ENCODE measurements at regions of chr18 and their contacts with region 1.

Region 1: DNA sequence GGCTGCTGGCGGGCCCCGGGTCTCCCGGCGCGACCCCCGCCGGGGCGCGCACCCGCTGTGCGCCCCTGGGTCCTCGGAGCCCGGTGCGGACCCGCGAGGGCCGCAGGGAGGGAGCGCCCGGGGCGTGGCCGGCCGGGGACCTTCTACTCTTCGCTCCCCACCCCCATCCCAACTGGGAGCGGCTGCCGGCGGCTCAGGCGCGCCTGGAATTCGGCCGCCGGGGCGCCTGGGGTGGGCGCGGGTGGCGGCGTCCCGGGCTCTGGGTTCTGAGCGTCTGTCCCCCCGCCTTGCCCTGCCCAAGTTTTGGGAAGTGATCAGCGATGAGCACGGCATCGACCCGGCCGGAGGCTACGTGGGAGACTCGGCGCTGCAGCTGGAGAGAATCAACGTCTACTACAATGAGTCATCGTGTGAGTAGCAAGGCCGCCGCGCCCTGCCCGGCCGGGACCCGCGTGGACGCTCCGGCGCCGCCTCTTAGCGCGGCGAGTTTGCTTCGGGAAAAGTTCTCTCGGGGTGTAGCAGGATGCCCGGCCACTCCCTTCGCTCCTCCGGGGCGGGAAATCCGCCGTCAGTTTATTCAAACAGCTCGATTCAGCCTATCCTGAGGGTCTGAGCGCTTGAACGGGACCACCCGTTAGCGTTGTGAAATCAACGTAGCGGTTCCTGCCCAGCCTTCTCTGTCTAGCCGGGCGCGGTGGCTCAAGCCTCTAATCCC is 502 bp downstream of the TUBB6 start:
- DNase-seq: peak; percentile 43 to 75
- ATAC-seq: peak; percentile 84 to 91
- H3K4me3 ChIP-seq: peak overlapping the region; percentile 62
- H3K27ac ChIP-seq: peak overlapping the region; percentile 82 to 99
- H3K4me1 ChIP-seq: peaks cover 11% of the 10 kb centered on the region
- CTCF ChIP-seq: no peak
- EP300 ChIP-seq: no peak
- POLR2A ChIP-seq: no peak; the same call in 1 of the 2 replicates
- RAD21 ChIP-seq: no peak

Region 2: GRCh38 chr18:12060182-12060870 is 248.2 kb before region 1 on chr18:
- CTCF ChIA-PET with region 1: no interaction called
- POLR2A ChIA-PET with region 1: interaction called, 14 read pairs
- DNase-seq: peak in 1 of 2 experiments; percentile 21
- ATAC-seq: peak; percentile 92 to 93
- H3K4me3 ChIP-seq: no peak overlapping the region
- H3K27ac ChIP-seq: 0 out of 6 replicates have a peak overlapping the region, but pooled peaks of 1 of the 2 experiments have one; percentile 31
- H3K4me1 ChIP-seq: 0 out of 3 replicates have a peak, but pooled peaks cover 3% of the 10 kb centered on the region
- CTCF ChIP-seq: no peak
- EP300 ChIP-seq: no peak
- POLR2A ChIP-seq: no peak
- RAD21 ChIP-seq: no peak

Region 3: GRCh38 chr18:12327510-12328178 is 19.1 kb after region 1 on chr18:
- CTCF ChIA-PET with region 1: interaction called, 18 read pairs
- POLR2A ChIA-PET with region 1: interaction called, 4 read pairs
- DNase-seq: peak; percentile 77
- ATAC-seq: peak; percentile 92 to 93
- H3K4me3 ChIP-seq: no peak overlapping the region
- H3K27ac ChIP-seq: no peak overlapping the region
- H3K4me1 ChIP-seq: peaks cover 4% of the 10 kb centered on the region; the same call in 1 of the 3 replicates
- CTCF ChIP-seq: peak; percentile 66
- EP300 ChIP-seq: no peak
- POLR2A ChIP-seq: no peak
- RAD21 ChIP-seq: peak; percentile 30 to 35; a peak in 4 of 5 replicates

Measured in A549 (cell line).